HEK293 (cell line): ENCODE measurements at regions of chr12 and their contacts with region 1.

Region 1: DNA sequence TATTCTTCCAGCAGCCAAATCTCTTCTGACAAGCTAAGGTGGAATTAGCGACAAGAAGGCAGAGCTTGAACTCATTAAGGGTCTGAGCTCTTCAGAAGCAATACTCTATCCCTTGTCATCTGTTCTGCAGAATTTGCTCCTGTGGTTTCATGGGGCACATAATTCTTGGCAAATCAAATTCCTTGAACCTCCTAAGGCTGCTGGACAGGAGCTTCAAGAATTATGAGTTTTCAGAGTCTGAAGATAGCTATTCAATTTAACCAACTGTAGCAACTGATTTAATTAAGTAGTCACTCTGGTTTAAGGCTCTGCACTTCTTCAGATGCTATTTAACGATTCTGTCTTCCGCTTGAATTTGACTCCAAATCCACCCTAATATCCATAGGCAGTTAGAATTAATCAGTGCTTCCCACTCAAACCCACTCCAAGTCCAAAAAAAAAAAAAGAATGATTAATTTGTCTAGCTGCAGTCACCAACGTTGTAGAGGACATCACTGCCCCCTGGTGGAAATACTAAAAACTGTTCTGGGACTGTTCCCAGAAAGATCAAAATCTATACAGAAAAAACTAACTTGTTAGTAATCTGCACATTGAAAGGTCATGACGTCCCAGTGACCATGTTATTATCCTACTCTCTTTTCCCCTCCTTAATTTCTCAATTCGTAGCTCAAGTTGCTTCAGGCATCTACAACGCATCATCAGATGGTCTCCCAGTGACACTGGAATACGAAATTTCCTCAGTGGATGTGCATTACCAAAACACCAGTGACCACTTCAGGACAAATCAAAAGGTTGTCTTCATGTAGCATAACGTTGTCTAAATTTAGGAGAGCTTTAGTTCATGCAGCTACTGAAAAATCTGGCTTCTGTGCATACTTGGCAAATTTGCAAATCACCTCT is 169.8 kb downstream of the KIF21A start:
- H3K4me3 ChIP-seq: no peak overlapping the region
- H3K27ac ChIP-seq: no peak overlapping the region
- H3K4me1 ChIP-seq: no peaks in the 10 kb centered on the region
- CTCF ChIP-seq: peak; percentile 40; the same call in 1 of the 2 replicates

Region 2: GRCh38 chr12:38327356-38327755 is 945.8 kb before region 1 on chr12:
- CTCF ChIA-PET with region 1: interaction called, 19 read pairs
- POLR2A ChIA-PET with region 1: no interaction called
- H3K4me3 ChIP-seq: no peak overlapping the region
- H3K27ac ChIP-seq: no peak overlapping the region
- H3K4me1 ChIP-seq: no peaks in the 10 kb centered on the region
- CTCF ChIP-seq: no peak

Region 3: DNA sequence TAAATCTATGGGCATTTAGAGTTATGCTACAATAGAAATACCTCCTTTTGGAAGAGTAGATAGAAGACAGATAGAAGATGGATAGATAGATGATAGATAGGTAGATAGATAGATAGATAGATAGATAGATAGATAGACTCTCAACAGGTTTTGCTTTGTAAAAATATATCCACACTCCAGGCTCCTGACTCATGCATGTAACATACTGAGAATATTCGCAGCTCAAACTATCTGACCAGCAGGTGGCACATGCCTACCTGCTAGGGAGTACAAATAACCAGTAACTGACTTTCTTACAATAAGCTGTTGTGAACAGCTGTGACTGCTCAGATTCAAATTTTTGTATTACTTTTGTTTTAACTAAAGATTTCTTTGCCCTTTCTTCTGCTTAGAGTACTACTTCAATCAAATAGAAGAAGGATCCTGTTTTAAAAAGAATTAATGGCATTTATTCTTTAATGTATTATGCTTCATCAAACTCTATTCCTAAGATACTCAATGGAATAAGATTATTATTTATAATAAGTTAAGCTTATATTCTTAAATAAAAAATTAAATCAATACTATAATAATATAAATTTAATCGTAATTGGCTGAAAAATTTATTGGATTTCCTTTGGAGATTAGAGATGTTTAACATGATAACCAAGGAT is 352.0 kb before region 1 on chr12:
- CTCF ChIA-PET with region 1: interaction called, 19 read pairs
- POLR2A ChIA-PET with region 1: no interaction called
- H3K4me3 ChIP-seq: no peak overlapping the region
- H3K27ac ChIP-seq: no peak overlapping the region
- H3K4me1 ChIP-seq: no peaks in the 10 kb centered on the region
- CTCF ChIP-seq: peak; percentile 46; the same call in 1 of the 2 replicates

Region 4: GRCh38 chr12:39145175-39145999 is 127.7 kb before region 1 on chr12:
- CTCF ChIA-PET with region 1: interaction called, 24 read pairs
- POLR2A ChIA-PET with region 1: no interaction called
- H3K4me3 ChIP-seq: peak overlapping the region; percentile 44
- H3K27ac ChIP-seq: peak overlapping the region; percentile 22; the same call in 1 of the 2 replicates
- H3K4me1 ChIP-seq: no peaks in the 10 kb centered on the region
- CTCF ChIP-seq: no peak

Region 5: DNA sequence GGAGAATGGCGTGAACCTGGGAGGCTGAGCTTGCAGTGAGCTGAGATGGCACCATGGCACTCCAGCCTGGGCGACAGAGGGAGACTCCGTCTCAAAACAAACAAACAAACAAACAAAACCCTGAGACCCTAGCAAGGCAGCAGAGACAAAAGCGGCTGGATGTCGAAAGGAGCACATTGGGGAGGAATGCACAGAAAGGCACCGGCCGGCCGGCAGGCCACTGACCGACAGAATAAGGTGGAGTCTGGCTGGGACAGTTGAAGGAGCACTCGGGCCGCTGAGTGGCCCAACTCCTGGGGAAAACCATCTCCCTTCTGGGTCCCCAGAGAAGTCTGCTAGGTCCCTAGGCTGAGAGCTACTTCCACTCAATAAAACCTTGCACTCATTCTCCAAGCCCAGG is 86.4 kb before region 1 on chr12:
- CTCF ChIA-PET with region 1: no interaction called
- POLR2A ChIA-PET with region 1: no interaction called
- H3K4me3 ChIP-seq: no peak overlapping the region
- H3K27ac ChIP-seq: no peak overlapping the region
- H3K4me1 ChIP-seq: no peaks in the 10 kb centered on the region
- CTCF ChIP-seq: no peak

Region 6: GRCh38 chr12:39297891-39298370 is 24.8 kb after region 1 on chr12:
- CTCF ChIA-PET with region 1: interaction called, 14 read pairs
- POLR2A ChIA-PET with region 1: no interaction called
- H3K4me3 ChIP-seq: no peak overlapping the region
- H3K27ac ChIP-seq: no peak overlapping the region
- H3K4me1 ChIP-seq: peaks cover 13% of the 10 kb centered on the region
- CTCF ChIP-seq: no peak

Region 7: DNA sequence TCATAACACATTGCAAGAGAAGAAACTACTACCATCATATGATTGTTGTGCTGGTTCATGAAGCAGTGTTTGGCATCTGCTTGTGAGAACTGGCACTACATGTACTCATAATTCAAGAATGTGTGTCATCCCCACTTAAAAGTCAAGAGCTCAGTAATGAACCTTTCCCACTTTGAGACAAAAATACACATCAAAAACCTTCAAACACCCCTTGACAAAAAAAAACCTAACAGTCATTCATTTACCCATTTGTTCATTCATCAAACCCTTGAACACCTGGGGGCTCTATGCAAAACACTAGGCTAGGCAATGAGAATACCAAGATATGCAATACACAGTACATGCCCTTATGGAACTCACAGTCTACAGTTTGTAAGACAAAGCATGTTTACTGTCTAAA is 129.8 kb after region 1 on chr12:
- CTCF ChIA-PET with region 1: no interaction called
- POLR2A ChIA-PET with region 1: no interaction called
- H3K4me3 ChIP-seq: no peak overlapping the region
- H3K27ac ChIP-seq: no peak overlapping the region
- H3K4me1 ChIP-seq: no peaks in the 10 kb centered on the region
- CTCF ChIP-seq: no peak